Sigmoid colon (tissue), 7 donors: ENCODE measurements at regions of chr19 and their contacts with region 1.

Region 1: DNA sequence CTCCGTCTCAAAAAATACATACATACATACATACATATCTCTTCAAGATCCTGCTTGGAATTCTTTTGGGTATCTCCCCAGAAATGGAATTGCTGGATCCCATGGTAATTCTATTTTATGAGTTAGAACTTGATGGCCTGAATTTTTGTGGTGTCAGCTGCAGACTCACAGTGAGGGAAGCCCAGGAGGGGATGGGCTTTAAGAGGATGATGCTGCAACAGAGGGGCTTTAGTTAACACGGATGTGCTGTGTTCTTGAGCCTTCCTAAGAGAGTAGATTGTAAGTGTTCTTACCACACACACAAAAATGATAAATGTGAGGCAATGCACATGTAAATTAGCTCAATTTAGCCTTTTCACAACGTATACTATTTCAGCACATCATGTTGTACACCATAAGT is 31.8 kb downstream of the CACNG6 start:
- DNase-seq: no peak
- H3K4me3 ChIP-seq: no peak overlapping the region
- H3K27ac ChIP-seq: no peak overlapping the region
- H3K4me1 ChIP-seq: no peaks in the 10 kb centered on the region
- H3K27me3 ChIP-seq: peaks cover 0 to 36% (median 14%) of the 10 kb centered on the region in 3 donors
- CTCF ChIP-seq: no peak
- EP300 ChIP-seq: no peak
- POLR2A ChIP-seq: no peak

Region 2: GRCh38 chr19:53844849-53845246 is 178.3 kb before region 1 on chr19:
- intact Hi-C with region 1: loop called (anchors 1 kb)
- DNase-seq: no peak
- H3K4me3 ChIP-seq: no peak overlapping the region
- H3K27ac ChIP-seq: no peak overlapping the region
- H3K4me1 ChIP-seq: peaks cover 0 to 8% (median 3%) of the 10 kb centered on the region in 4 donors
- H3K27me3 ChIP-seq: peaks cover 0 to 17% (median 0%) of the 10 kb centered on the region in 3 donors
- CTCF ChIP-seq: no peak
- EP300 ChIP-seq: no peak
- POLR2A ChIP-seq: no peak

Region 3: DNA sequence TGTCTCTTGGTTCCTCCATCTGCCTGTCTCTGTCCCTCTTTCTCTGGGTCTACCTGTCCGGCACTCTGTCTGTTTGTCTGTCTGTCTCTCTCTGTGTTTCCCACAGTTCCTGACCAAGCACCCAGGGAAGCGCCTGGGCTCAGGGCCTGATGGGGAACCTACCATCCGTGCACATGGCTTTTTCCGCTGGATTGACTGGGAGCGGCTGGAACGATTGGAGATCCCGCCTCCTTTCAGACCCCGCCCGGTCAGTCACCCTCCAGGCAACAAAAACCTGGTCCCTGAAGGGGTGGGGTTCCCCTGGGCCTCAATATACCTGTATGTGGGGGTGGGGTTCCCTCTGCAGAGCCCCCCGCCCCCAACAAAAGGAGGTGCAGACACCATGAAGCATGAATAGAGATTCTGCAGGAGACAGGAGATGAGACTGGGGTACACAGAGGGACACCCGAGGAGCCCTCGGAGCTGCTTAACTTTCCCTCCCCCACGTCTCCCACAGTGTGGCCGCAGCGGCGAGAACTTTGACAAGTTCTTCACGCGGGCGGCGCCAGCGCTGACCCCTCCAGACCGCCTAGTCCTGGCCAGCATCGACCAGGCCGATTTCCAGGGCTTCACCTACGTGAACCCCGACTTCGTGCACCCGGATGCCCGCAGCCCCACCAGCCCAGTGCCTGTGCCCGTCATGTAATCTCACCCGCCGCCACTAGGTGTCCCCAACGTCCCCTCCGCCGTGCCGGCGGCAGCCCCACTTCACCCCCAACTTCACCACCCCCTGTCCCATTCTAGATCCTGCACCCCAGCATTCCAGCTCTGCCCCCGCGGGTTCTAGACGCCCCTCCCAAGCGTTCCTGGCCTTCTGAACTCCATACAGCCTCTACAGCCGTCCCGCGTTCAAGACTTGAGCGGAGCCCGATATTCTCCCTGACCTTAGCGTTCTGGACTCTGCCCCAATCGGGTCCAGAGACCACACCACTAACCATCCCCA is 116.7 kb before region 1 on chr19:
- intact Hi-C with region 1: loop called (anchors 5 kb)
- DNase-seq: no peak
- H3K4me3 ChIP-seq: no peak overlapping the region
- H3K27ac ChIP-seq: no peak overlapping the region
- H3K4me1 ChIP-seq: peaks cover 0 to 35% (median 19%) of the 10 kb centered on the region in 4 donors
- H3K27me3 ChIP-seq: peaks cover 44 to 71% (median 50%) of the 10 kb centered on the region in 3 donors
- CTCF ChIP-seq: peak; percentile 21 to 84 (median 58)
- EP300 ChIP-seq: no peak
- POLR2A ChIP-seq: no peak